Activated CD4-positive, alpha-beta memory T cell treated with anti-CD3 and anti-CD28 coated beads, Interleukin-2, amount 10 ng/mL, durations not matched to agents 7 days and 5 days (primary cell): ENCODE measurements at regions of chr15 and their contacts with region 1.

Region 1: GRCh38 chr15:74725845-74726773 is 781 bp upstream of the CYP1A1 start:
- DNase-seq: peak; percentile 71
- H3K4me3 Mint-ChIP-seq: peak overlapping the region; percentile 69
- H3K27ac Mint-ChIP-seq: peak overlapping the region; percentile 82
- H3K4me1 Mint-ChIP-seq: peaks cover 20% of the 10 kb centered on the region
- H3K27me3 Mint-ChIP-seq: peaks cover 16% of the 10 kb centered on the region

Region 2: GRCh38 chr15:74695597-74696397 is 30.3 kb before region 1 on chr15 and contains the start of gene EDC3:
- CTCF ChIA-PET with region 1: interaction called, 3 read pairs
- POLR2A ChIA-PET with region 1: interaction called, 11 read pairs
- DNase-seq: peak; percentile 86
- H3K4me3 Mint-ChIP-seq: peak within 1 kb of the TSS; percentile 100
- H3K27ac Mint-ChIP-seq: peak within 1 kb of the TSS; percentile 96
- H3K4me1 Mint-ChIP-seq: peaks cover 42% of the 10 kb centered on the region
- H3K27me3 Mint-ChIP-seq: no peaks in the 10 kb centered on the region
- total RNA-seq, gene EDC3: 36.3 to 39.6 TPM